ENCODE measurements at regions of chr9 and their contacts with region 1.

Region 1: GRCh38 chr9:128275996-128276573 is at the starts of genes GOLGA2 and SWI5:
- DNase-seq: peak; percentile 97 to 99
- ATAC-seq: peak; percentile 91 to 97
- H3K4me3 ChIP-seq: peak within 1 kb of the TSS; percentile 95
- H3K27ac ChIP-seq: peak within 1 kb of the TSS; percentile 94
- H3K4me1 ChIP-seq: peaks cover 12% of the 10 kb centered on the region; the same call in 2 of the 3 replicates
- CTCF ChIP-seq: no peak
- EP300 ChIP-seq: no peak
- POLR2A ChIP-seq: peak; percentile 96
- RAD21 ChIP-seq: no peak
- polyA plus RNA-seq, gene GOLGA2: 55.3 and 61.9 TPM in 2 replicates
- polyA plus RNA-seq, gene SWI5: 66.8 and 67.6 TPM in 2 replicates

Region 2: DNA sequence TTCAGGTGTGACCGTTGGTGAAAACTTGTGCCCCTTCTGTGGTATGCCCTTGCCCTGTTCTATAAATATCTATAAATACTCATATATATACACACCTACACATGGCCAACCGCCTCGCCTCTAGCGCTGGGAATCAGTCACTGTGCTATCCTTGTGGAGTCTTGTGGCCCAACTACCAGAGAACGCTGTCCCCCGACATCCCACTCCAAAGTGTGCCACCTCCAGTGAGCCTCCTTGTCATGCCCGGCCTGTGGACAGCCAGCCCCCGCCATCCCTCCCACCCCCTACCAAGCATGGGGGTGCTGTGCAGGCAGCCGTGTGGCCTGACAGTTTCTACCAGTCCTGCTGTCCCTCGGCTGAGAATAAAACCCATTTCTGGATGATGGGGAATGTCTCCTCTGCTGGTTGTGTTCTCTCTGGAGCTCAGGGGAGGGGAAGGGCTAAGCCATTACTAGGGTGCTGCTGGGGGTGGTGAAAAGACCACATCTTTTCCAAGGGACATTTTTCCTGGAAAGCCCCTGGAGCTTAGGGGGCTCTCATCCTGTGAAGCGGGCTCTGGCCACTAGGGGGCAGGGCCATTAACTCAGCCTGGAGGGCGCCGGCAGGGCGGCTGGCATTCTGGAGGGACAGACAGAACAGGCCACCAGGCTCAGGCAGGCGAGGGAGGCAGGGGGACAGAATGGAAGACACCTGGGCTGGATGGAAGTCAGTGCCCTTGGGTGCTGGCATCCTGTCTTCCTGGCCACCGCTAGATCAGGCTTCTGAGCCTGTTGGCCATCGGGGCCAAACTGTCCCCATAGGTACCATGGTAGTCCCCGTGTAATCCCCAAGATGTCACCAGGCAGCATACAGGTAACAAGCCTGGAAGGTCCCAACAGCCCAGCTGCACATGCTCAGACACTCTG is 21.0 kb before region 1 on chr9:
- CTCF ChIA-PET with region 1: interaction called, 10 read pairs
- POLR2A ChIA-PET with region 1: interaction called, 4 read pairs
- DNase-seq: peak; percentile 61 to 88
- ATAC-seq: peak; percentile 33 to 79; a peak in 5 of 6 replicates
- H3K4me3 ChIP-seq: no peak overlapping the region
- H3K27ac ChIP-seq: 0 out of 6 replicates have a peak overlapping the region, but pooled peaks of 1 of the 2 experiments have one; percentile 29
- H3K4me1 ChIP-seq: no peaks in the 10 kb centered on the region
- CTCF ChIP-seq: peak; percentile 75
- EP300 ChIP-seq: no peak
- POLR2A ChIP-seq: no peak
- RAD21 ChIP-seq: peak; percentile 32 to 33; a peak in 4 of 5 replicates

Region 3: DNA sequence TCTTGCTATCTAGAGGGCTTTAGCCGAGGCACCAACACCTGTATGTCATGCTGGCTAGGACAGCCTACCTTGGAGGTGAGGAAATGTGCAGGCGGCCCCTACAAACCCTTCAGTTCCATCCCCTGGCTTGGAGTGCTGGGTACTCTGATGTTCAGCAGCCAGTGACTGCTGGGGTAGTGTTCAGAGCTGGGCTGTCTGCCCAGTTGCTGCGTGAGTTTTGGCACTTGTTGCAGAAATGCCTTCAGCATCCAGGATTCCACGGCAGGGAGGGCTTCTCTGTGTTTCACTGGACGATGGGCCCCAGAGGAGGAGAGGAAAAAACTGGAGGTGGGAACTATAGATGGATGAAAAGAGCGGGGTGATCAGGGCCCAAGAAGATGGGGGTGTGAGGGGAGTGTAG is 10.4 kb after region 1 on chr9:
- CTCF ChIA-PET with region 1: interaction called, 4 read pairs
- POLR2A ChIA-PET with region 1: interaction called, 19 read pairs
- DNase-seq: no peak
- ATAC-seq: no peak
- H3K4me3 ChIP-seq: no peak overlapping the region
- H3K27ac ChIP-seq: no peak overlapping the region
- H3K4me1 ChIP-seq: no peaks in the 10 kb centered on the region
- CTCF ChIP-seq: no peak
- EP300 ChIP-seq: no peak
- POLR2A ChIP-seq: no peak
- RAD21 ChIP-seq: no peak

Region 4: DNA sequence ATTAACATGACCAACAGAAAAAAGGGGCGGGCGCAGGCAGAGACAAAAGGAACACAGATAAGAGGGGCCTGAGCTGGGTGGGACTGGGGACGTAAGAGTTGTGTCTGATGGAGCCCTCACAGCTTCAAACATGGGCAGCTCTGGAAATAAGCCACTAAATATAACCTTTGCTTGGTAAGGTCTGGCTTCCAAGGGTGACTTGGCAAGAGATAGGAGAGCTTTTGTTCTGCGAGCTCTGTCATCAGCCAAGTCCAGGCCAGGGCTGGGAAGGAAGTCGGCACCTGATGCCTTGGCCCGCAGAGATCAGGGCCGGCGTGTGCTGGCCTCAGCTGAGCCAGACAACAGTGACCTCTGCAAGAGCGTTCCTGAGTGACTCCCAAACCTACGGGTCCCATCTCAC is 34.4 kb after region 1 on chr9:
- CTCF ChIA-PET with region 1: interaction called, 3 read pairs
- POLR2A ChIA-PET with region 1: interaction called, 10 read pairs
- DNase-seq: no peak
- ATAC-seq: no peak
- H3K4me3 ChIP-seq: no peak overlapping the region
- H3K27ac ChIP-seq: peak overlapping the region in 1 of 2 experiments; percentile 20; a peak in 2 of 6 replicates
- H3K4me1 ChIP-seq: peaks cover 30% of the 10 kb centered on the region
- CTCF ChIP-seq: no peak
- EP300 ChIP-seq: no peak
- POLR2A ChIP-seq: no peak
- RAD21 ChIP-seq: no peak